Mammary epithelial cell (primary cell): ENCODE measurements at regions of chr3 and their contacts with region 1.

Region 1: GRCh38 chr3:94862703-94863102 is 799.8 kb downstream of the NSUN3 start:
- DNase-seq: no peak
- H3K4me3 ChIP-seq: no peak overlapping the region
- H3K27ac ChIP-seq: no peak overlapping the region
- H3K4me1 ChIP-seq: no peaks in the 10 kb centered on the region
- H3K27me3 ChIP-seq: no peaks in the 10 kb centered on the region
- CTCF ChIP-seq: peak; percentile 39 to 64

Region 2: DNA sequence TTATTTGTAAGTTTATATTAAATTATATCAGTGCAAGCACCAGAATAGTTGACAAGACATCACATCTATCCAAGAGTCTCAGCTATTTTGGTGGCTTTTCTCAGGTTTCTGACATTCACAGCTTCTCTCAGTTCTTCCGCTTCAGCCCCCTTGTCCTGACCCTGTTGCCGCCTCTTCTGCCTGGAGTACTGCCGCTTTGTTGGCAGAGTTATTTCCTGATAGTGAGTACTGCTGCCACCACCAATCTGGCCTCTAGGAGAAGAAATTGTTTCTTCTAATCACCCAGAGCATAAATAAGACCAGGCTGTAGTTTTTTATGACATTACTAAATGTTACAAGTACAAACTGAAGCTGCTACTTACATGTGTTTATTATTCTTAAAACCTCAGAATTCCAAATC is 329.8 kb before region 1 on chr3:
- CTCF ChIA-PET with region 1: no interaction called
- dilution Hi-C with region 1: no loop called
- in situ Hi-C with region 1: no loop called
- intact Hi-C with region 1: no loop called
- DNase-seq: no peak
- H3K4me3 ChIP-seq: no peak overlapping the region
- H3K27ac ChIP-seq: no peak overlapping the region
- H3K4me1 ChIP-seq: no peaks in the 10 kb centered on the region
- H3K27me3 ChIP-seq: no peaks in the 10 kb centered on the region
- CTCF ChIP-seq: no peak

Region 3: DNA sequence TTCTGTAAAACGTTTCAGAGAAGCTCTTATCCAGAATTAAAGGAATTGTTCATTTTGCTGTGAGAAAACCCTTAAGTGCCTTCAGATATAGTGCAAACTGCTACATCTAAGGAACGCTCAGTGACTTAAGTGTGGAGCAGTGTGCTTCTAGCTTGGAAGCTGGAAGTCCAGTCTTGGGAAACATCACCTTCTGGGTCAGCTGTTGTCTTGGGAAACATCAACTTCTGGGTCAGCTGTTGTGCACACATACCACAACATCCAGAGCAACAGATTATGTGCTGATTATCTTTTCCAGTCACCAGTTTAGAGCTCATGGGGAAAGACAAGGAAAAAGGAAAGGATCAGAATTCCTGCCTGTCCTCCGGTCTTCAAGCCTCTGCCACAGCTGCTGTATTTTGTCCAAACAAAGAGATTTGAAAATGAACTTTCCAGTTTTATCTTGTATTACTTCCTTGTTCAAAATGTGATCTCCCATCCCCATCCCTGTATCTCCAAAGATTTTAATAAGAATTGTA is 86.2 kb before region 1 on chr3:
- CTCF ChIA-PET with region 1: no interaction called
- dilution Hi-C with region 1: no loop called
- in situ Hi-C with region 1: no loop called
- intact Hi-C with region 1: no loop called
- DNase-seq: no peak
- H3K4me3 ChIP-seq: no peak overlapping the region
- H3K27ac ChIP-seq: no peak overlapping the region
- H3K4me1 ChIP-seq: no peaks in the 10 kb centered on the region
- H3K27me3 ChIP-seq: no peaks in the 10 kb centered on the region
- CTCF ChIP-seq: no peak

Region 4: DNA sequence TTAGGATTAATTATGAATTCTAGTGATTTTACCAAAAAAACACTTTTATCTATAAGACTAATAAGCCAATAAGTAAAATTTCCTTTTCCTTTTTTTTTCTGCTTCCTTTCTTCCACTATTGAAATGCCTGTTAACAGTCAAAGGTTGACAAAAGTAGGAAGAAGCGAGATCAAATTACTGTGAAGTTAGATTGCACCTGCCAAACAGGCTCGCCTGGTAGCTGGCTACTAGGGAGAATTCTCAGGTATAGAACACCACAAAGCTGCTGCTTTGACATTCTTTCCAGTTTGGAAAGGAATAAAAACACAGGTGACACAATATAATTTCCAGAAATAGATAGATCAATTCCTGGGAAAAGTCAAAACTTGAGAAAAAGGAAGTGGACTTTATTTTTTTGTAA is 50.9 kb before region 1 on chr3:
- CTCF ChIA-PET with region 1: no interaction called
- dilution Hi-C with region 1: no loop called
- in situ Hi-C with region 1: no loop called
- intact Hi-C with region 1: no loop called
- DNase-seq: no peak
- H3K4me3 ChIP-seq: no peak overlapping the region
- H3K27ac ChIP-seq: no peak overlapping the region
- H3K4me1 ChIP-seq: no peaks in the 10 kb centered on the region
- H3K27me3 ChIP-seq: no peaks in the 10 kb centered on the region
- CTCF ChIP-seq: no peak

Region 5: GRCh38 chr3:95265129-95265528 is 402.4 kb after region 1 on chr3:
- CTCF ChIA-PET with region 1: no interaction called
- dilution Hi-C with region 1: no loop called
- in situ Hi-C with region 1: no loop called
- intact Hi-C with region 1: no loop called
- DNase-seq: no peak
- H3K4me3 ChIP-seq: no peak overlapping the region
- H3K27ac ChIP-seq: no peak overlapping the region
- H3K4me1 ChIP-seq: no peaks in the 10 kb centered on the region
- H3K27me3 ChIP-seq: no peaks in the 10 kb centered on the region
- CTCF ChIP-seq: no peak

Region 6: DNA sequence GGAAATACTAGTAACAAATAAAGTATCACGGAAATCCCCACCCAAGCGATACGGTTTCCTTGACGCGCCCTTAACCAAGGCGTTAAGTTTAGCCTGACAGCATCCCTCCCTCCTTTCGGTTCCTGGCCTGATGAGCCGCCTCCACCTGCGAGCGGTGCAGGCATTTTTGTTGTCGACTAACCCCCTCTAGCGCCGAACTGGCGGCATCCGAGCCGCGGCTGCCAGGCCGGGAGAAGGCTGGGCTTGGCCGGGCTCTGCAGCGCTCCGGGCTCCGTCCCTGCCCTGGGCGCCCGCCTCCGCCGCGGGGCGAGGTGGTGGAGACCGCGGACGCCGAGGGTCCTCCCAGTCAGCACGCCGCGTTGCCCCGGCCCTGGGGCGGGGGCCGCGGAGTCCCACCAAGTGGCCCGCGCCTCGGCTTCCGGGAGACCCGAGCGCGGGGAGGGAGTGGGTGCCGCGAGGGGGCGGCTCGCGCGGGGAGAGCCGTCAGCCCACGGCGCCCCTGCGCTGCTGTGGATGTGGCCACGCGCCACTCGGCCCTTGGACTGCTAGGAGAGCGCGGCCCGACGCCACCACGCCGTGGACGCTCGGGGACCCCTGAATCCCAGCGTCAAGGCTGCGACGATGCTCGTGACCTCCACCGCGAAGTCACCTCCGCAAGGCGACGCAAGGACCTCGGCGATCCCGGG is 1950.6 kb after region 1 on chr3:
- CTCF ChIA-PET with region 1: no interaction called
- dilution Hi-C with region 1: no loop called
- in situ Hi-C with region 1: no loop called
- intact Hi-C with region 1: loop called (anchors 10 kb)
- DNase-seq: peak; percentile 57
- H3K4me3 ChIP-seq: peak overlapping the region; percentile 47 to 52 (median 48)
- H3K27ac ChIP-seq: no peak overlapping the region
- H3K4me1 ChIP-seq: peaks cover 13% of the 10 kb centered on the region
- H3K27me3 ChIP-seq: peaks cover 17% of the 10 kb centered on the region
- CTCF ChIP-seq: peak; percentile 42 to 73